Activated CD4-positive, alpha-beta memory T cell treated with anti-CD3 and anti-CD28 coated beads for 36 hours (primary cell): ENCODE measurements at regions of chr16 and their contacts with region 1.

Region 1: GRCh38 chr16:14309001-14309886 is 238.1 kb downstream of the MRTFB start:
- DNase-seq: peak; percentile 37
- H3K4me3 Mint-ChIP-seq: peak overlapping the region; percentile 49
- H3K27ac Mint-ChIP-seq: no peak overlapping the region
- H3K4me1 Mint-ChIP-seq: peaks cover 18% of the 10 kb centered on the region
- H3K27me3 Mint-ChIP-seq: no peaks in the 10 kb centered on the region

Region 2: GRCh38 chr16:14354551-14355351 is 45.5 kb after region 1 on chr16:
- CTCF ChIA-PET with region 1: interaction called, 3 read pairs
- POLR2A ChIA-PET with region 1: no interaction called
- intact Hi-C with region 1: loop called (anchors 5 kb)
- DNase-seq: peak; percentile 71
- H3K4me3 Mint-ChIP-seq: no peak overlapping the region
- H3K27ac Mint-ChIP-seq: no peak overlapping the region
- H3K4me1 Mint-ChIP-seq: peaks cover 10% of the 10 kb centered on the region
- H3K27me3 Mint-ChIP-seq: peaks cover 4% of the 10 kb centered on the region

Region 3: DNA sequence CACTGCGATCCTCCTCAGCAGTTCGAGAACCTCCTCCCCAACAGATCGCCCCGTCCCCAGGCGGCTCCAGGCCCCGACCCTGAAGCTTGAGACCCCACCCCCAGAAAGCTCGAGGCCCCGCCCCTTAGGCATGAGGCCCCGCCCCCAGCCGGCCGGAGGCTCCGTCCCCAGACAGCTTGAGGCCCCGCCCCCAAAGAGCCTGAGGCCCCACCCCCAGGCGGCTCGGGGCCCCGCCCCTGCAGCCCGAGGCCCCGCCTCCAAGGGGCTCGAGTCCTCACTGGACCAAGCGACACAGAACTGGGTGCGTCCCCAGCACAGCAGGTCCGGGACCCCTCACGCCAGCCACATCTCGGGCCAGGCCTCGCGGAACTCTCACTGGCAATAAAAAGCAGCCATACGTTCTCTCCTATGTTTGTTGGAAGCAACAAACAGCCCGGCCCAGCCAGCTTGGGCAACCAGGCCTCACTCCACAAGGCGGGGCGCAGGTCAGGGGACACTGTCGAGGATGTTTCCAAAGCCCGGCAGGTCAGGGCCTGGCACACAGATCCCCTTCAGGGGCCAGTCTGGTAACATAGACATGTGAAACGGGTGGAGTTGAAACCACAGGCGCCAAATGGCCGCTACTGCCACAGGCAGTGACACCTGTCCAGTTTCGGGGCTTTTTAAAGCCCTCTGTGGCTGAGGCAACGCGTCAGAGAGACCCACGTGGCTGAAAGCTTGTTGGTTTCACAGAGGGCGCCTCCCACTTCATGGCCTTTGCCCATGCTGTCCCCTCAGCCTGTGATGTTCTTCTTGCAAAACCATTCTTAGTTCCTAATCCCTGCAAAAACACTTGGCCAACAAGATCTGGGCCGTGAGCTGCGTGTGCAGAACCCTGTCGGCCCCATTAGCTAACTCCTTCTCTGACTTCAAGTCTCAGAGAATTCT is 96.6 kb after region 1 on chr16:
- CTCF ChIA-PET with region 1: no interaction called
- POLR2A ChIA-PET with region 1: no interaction called
- intact Hi-C with region 1: no loop called
- DNase-seq: peak; percentile 32
- H3K4me3 Mint-ChIP-seq: no peak overlapping the region
- H3K27ac Mint-ChIP-seq: no peak overlapping the region
- H3K4me1 Mint-ChIP-seq: peaks cover 2% of the 10 kb centered on the region
- H3K27me3 Mint-ChIP-seq: no peaks in the 10 kb centered on the region

Region 4: DNA sequence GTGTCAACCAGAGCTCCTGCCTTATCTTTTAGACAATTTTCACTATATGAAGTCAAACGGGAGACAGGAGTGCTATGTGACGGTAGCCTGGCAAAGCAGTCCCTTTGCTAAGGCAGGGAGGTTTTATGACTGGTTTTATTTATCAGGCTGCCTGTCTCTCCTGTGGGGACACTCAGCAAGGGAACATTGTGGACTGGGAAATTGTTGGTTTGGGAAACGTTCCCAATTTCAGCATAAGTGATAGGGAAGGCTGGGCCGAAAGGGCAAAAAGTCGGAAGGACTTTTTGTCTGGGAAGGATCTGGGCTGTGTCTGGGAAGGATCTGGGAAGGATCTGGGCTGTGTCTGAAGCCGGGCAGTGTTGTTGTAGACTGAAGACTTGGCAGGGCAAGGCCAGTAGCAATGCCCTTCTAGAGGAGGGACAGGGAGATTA is 109.6 kb after region 1 on chr16:
- CTCF ChIA-PET with region 1: no interaction called
- POLR2A ChIA-PET with region 1: no interaction called
- intact Hi-C with region 1: no loop called
- DNase-seq: no peak
- H3K4me3 Mint-ChIP-seq: no peak overlapping the region
- H3K27ac Mint-ChIP-seq: no peak overlapping the region
- H3K4me1 Mint-ChIP-seq: no peaks in the 10 kb centered on the region
- H3K27me3 Mint-ChIP-seq: no peaks in the 10 kb centered on the region